Dorsolateral prefrontal cortex (tissue), 120 donors: ENCODE measurements at regions of chr9 and their contacts with region 1.

Region 1: DNA sequence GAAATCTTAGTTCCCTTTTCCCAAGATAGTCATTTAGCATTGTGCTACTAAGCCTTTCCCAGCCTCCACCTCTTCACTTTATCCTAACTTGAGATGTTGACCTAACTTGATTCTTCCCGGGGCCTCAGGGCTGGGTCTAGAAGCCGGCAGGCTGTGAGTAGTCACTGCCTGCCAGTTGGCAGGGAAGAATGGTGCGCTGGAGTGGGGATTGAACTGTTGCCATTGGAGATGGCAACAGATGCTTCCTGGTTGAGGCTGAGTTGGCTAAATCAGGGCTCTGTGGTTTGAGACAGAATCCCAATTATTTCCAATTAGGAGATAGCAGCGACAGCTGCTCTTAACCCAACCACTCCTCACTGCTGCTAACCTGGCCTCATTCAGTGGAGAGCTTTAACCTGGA is 343.1 kb downstream of the BRINP1 start:
- DNase-seq: peak in 8 of 10 donors; percentile 40 to 81 (median 58)
- H3K4me3 ChIP-seq: no peak overlapping the region
- H3K27ac ChIP-seq: peak overlapping the region in 58 of 59 donors; percentile 2 to 94 (median 78)
- H3K27me3 ChIP-seq: peaks cover 0 to 3% (median 0%) of the 10 kb centered on the region in 45 donors
- CTCF ChIP-seq: no peak

Region 2: DNA sequence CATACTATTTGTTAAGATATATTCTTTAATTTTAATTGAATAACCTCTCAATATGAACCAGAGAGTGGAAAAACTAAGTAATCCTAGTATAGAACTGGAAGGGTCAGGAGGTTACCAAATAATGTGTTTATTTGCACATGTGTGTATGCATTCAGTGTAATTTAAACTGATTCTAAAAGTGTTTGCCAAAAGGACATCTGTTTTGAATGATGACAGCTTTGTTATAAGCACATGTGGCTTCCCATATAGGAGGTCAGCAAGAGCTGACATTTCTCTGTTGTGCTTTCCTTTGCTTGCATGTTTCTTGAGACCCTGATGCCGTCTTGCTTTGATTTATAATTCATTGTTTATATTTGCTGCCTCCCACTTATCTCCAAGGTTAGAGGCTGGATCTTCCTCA is 40.3 kb before region 1 on chr9:
- intact Hi-C with region 1: no loop called
- DNase-seq: no peak
- H3K4me3 ChIP-seq: no peak overlapping the region
- H3K27ac ChIP-seq: no peak overlapping the region
- H3K27me3 ChIP-seq: no peaks in the 10 kb centered on the region
- CTCF ChIP-seq: no peak

Region 3: GRCh38 chr9:119137479-119137878 is 111.4 kb after region 1 on chr9:
- intact Hi-C with region 1: no loop called
- DNase-seq: no peak
- H3K4me3 ChIP-seq: no peak overlapping the region
- H3K27ac ChIP-seq: no peak overlapping the region
- H3K27me3 ChIP-seq: no peaks in the 10 kb centered on the region
- CTCF ChIP-seq: no peak

Region 4: DNA sequence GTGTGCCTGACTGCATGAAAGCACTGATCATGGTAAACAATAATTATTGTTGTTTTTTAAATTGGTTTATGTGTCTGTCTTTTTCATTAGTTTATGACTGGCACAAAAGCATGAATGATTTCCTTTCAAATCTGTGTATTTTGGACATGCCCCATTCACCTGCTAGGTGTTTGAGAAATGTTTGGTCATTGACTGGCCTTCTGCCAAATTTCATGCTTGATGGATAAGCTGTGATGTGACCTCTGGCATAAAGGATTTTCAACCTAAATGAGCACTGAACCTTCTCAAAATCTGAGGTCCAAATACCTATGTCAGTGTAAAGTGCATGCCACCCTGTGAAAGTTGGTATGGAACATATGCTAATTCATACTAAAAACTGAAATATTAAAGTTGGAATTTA is 138.6 kb after region 1 on chr9:
- intact Hi-C with region 1: loop called in 1 of 2 experiments (anchors 10 kb)
- DNase-seq: no peak
- H3K4me3 ChIP-seq: no peak overlapping the region
- H3K27ac ChIP-seq: no peak overlapping the region
- H3K27me3 ChIP-seq: no peaks in the 10 kb centered on the region
- CTCF ChIP-seq: no peak